ENCODE measurements at regions of chr17 and their contacts with region 1.

Region 1: GRCh38 chr17:74736513-74737298 is at the start of gene RAB37:
- DNase-seq: peak; percentile 57
- ATAC-seq: peak; percentile 20
- H3K4me3 Mint-ChIP-seq: peak within 1 kb of the TSS; percentile 85
- H3K27ac Mint-ChIP-seq: peak within 1 kb of the TSS; percentile 90
- H3K4me1 Mint-ChIP-seq: peaks cover 51% of the 10 kb centered on the region
- H3K27me3 Mint-ChIP-seq: peaks cover 11% of the 10 kb centered on the region
- total RNA-seq, gene RAB37: 19.1 to 19.6 TPM

Region 2: GRCh38 chr17:74723891-74724290 is 12.8 kb before region 1 on chr17:
- CTCF ChIA-PET with region 1: interaction called, 45 read pairs
- POLR2A ChIA-PET with region 1: interaction called, 3 read pairs
- DNase-seq: no peak
- ATAC-seq: no peak
- H3K4me3 Mint-ChIP-seq: no peak overlapping the region
- H3K27ac Mint-ChIP-seq: no peak overlapping the region
- H3K4me1 Mint-ChIP-seq: peaks cover 9% of the 10 kb centered on the region
- H3K27me3 Mint-ChIP-seq: peaks cover 32% of the 10 kb centered on the region

Region 3: GRCh38 chr17:74759243-74759801 is 22.6 kb after region 1 on chr17:
- CTCF ChIA-PET with region 1: interaction called, 43 read pairs
- POLR2A ChIA-PET with region 1: interaction called, 8 read pairs
- DNase-seq: peak; percentile 82
- ATAC-seq: peak; percentile 90
- H3K4me3 Mint-ChIP-seq: peak overlapping the region; percentile 69
- H3K27ac Mint-ChIP-seq: peak overlapping the region; percentile 91
- H3K4me1 Mint-ChIP-seq: peaks cover 70% of the 10 kb centered on the region
- H3K27me3 Mint-ChIP-seq: no peaks in the 10 kb centered on the region

Region 4: DNA sequence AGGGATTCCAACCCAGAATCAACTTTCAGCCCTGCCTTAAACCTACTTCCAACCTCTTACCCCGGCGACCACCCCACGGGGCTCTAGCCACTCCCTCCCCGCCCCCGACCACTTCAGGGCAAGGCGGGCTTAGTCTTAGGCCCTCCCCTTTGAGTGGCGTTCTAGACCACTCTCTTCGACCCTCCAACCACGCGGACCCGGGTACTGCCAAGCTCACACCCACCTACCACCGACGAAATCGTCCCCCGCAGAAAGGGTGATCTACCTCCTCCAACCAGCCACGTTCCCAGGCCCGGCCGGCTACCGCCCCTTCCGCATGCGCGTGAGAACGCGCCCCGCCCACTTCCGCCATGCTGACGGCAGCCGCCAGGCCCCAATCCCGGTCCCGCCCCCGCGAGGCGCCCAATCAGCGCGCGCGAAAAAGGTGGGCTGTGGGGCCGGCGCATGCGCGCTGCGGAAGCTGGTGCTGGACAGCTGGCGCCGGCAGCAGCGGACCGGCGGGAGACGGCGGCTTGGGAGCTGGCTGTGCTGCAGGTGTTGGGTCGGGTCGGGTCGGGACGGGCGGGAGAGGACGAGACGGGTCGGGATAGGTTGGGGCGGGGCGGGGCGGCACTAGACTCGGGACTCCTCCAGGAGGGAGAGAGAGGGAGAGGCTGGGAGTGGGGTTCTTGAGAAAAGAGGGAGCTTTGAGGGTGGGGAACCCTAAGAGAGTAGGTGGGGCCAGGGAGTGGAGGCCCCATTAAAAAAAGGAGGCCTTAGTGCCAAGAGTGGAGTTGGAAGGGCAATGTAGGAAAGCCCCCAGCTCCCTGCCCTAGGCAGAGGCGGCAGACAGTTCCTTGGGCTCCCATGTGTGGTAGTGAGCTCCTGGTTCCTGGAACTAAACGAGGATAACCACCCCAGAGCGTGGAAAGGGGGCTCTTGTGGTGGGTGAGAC is 39.6 kb after region 1 on chr17 and contains the start of gene NAT9:
- CTCF ChIA-PET with region 1: interaction called, 33 read pairs
- POLR2A ChIA-PET with region 1: interaction called, 7 read pairs
- DNase-seq: peak; percentile 99
- ATAC-seq: peak; percentile 83
- H3K4me3 Mint-ChIP-seq: peak within 1 kb of the TSS; percentile 97
- H3K27ac Mint-ChIP-seq: peak within 1 kb of the TSS; percentile 89
- H3K4me1 Mint-ChIP-seq: peaks cover 70% of the 10 kb centered on the region
- H3K27me3 Mint-ChIP-seq: no peaks in the 10 kb centered on the region
- total RNA-seq, gene NAT9: 28.3 to 30.7 TPM

Region 5: GRCh38 chr17:74790161-74791054 is 53.7 kb after region 1 on chr17:
- CTCF ChIA-PET with region 1: interaction called, 34 read pairs
- POLR2A ChIA-PET with region 1: interaction called, 5 read pairs
- DNase-seq: no peak
- ATAC-seq: peak; percentile 19
- H3K4me3 Mint-ChIP-seq: peak overlapping the region; percentile 39
- H3K27ac Mint-ChIP-seq: peak overlapping the region; percentile 68
- H3K4me1 Mint-ChIP-seq: peaks cover 47% of the 10 kb centered on the region
- H3K27me3 Mint-ChIP-seq: no peaks in the 10 kb centered on the region

Measured in activated CD8-positive, alpha-beta T cell treated with anti-CD3 and anti-CD28 coated beads, Interleukin-2, amount 10 ng/mL, durations not matched to agents 7 days and 5 days (primary cell).